Left lung (tissue), 14 donors: ENCODE measurements at regions of chr2 and their contacts with region 1.

Region 1: GRCh38 chr2:20446917-20447436 is at the start of gene RHOB:
- DNase-seq: peak; percentile 97 to 99 (median 97)
- ATAC-seq: peak; percentile 90
- H3K4me3 ChIP-seq: peak within 1 kb of the TSS; percentile 87 to 88
- H3K27ac ChIP-seq: peak within 1 kb of the TSS; percentile 95 to 99
- H3K4me1 ChIP-seq: peaks cover 14 to 57% of the 10 kb centered on the region in 2 donors
- H3K27me3 ChIP-seq: no peaks in the 10 kb centered on the region
- CTCF ChIP-seq: no peak
- polyA plus RNA-seq, gene RHOB: 54.0 to 172 (median 92.6) TPM

Region 2: GRCh38 chr2:20487400-20488174 is 40.6 kb after region 1 on chr2:
- intact Hi-C with region 1: loop called in 1 of 2 experiments (anchors 5 kb)
- DNase-seq: no peak
- ATAC-seq: no peak
- H3K4me3 ChIP-seq: no peak overlapping the region
- H3K27ac ChIP-seq: no peak overlapping the region
- H3K4me1 ChIP-seq: peaks cover 0 to 5% of the 10 kb centered on the region in 2 donors
- H3K27me3 ChIP-seq: no peaks in the 10 kb centered on the region
- CTCF ChIP-seq: no peak

Region 3: DNA sequence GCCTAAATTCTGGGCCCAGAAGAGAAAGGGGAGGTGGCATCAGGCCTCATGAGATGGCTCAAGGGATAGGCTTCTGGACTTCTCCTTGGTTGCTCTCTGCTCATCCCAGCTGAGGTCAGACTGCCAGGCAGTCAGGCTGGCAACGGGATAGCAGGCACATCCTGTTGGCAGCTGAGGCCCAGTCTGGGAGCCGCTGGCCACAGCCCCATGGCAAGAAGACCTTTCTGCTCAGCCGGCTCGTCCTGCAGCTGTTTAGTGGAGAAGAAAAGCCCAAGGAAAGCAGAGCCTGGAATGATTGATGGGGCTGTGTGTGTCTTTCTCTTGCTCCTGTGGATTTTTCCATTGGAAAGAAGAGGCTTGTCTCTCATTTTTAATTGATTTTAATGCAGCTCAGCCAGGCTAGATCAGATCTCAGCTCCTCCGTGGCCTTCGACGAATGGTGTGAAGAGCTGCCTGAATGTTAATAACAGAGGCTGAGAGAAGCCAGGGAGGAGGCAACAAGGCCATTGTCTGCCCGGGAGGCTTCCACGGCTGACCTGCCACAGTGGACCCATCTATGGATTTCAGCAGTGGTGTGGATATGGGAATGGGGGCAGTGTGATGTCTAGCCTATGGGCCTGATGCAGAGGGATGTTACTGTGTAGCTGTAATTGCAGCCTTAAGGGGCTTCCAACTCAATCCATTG is 104.4 kb after region 1 on chr2:
- intact Hi-C with region 1: no loop called
- DNase-seq: peak in 1 of 4 donors; percentile 54
- ATAC-seq: no peak
- H3K4me3 ChIP-seq: no peak overlapping the region
- H3K27ac ChIP-seq: no peak overlapping the region
- H3K4me1 ChIP-seq: no peaks in the 10 kb centered on the region
- H3K27me3 ChIP-seq: no peaks in the 10 kb centered on the region
- CTCF ChIP-seq: no peak

Region 4: GRCh38 chr2:20561701-20562454 is 114.9 kb after region 1 on chr2:
- intact Hi-C with region 1: no loop called
- DNase-seq: no peak
- ATAC-seq: no peak
- H3K4me3 ChIP-seq: no peak overlapping the region
- H3K27ac ChIP-seq: no peak overlapping the region
- H3K4me1 ChIP-seq: no peaks in the 10 kb centered on the region
- H3K27me3 ChIP-seq: no peaks in the 10 kb centered on the region
- CTCF ChIP-seq: no peak

Region 5: DNA sequence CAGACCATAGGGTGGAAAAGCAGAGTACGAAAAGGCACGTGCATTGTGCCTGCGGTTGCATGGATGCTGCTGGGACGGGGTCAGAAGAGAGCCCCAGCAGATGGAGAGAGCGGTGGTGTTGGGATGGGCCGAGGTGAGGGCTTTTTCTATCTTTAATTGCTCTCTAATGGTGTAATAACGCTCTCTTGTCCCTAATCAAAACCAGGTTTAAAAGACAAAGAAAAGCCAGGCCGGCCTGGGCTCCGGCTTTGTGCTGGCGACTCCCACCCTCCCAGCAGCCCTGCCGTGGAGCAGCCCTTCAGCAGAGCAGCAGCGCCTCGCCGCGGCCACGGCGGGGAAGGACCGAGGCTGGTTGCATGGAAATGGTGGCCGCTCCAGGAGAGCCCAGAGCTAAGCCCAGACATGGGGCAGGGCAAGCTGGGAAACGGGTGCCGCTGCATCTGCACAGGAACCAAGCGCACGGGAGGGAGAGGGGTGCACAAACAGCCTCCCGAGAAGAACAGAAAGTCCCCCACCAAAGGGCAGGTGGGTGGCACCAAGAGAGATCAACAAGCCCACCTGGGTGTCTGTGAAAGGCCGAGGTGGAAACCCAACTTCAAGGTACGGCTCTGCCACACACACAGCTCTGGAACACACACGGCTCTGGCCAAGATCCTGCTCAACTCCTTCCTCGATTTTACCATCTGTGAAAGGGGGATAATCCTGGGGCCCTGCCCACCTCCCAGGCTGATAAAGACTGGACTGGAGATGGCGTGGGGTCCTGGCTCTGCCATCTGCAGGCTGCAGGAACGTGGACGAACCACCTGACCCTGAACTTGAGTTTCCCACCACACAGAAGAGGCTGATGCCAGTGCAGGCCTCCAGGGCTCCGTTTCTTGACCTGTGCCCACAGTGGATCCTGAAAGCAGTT is 189.0 kb after region 1 on chr2:
- intact Hi-C with region 1: loop called (anchors 2 to 10 kb)
- DNase-seq: peak; percentile 76 to 92 (median 83)
- ATAC-seq: peak; percentile 83
- H3K4me3 ChIP-seq: no peak overlapping the region
- H3K27ac ChIP-seq: peak overlapping the region; percentile 69 to 75
- H3K4me1 ChIP-seq: peaks cover 22 to 23% of the 10 kb centered on the region in 2 donors
- H3K27me3 ChIP-seq: no peaks in the 10 kb centered on the region
- CTCF ChIP-seq: peak; percentile 84 to 86